ENCODE measurements at regions of chr2 and their contacts with region 1.

Region 1: GRCh38 chr2:9142551-9143263 is 63.9 kb upstream of the ASAP2 start:
- DNase-seq: peak; percentile 73 to 97 (median 88)

Region 2: DNA sequence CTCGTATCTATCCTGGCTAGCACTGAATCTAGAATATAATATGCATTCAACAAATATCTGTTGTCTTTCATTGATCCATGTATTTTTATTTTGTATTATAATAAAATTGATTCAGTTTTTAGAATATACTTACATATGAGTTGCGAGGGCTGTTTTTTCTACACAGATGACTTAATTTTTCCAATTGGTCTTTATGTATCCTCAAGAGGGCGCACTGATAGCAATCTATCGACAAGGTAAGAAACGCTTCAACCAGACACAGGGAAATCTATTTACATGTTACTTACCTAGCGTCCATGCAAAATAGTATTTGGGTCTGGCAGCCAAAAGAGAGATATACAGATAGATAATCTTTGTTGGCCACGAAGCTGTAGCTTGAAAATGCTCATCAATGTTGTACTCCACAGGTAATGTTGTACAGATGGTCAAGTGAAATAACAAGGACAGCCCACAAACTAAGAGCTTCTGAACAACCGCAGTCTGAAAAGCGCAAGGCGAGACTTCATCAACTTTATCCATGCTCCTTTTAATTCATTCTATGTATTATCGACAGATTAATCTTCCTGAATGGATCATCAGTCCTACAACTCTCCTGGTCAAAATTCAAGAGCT is 269.8 kb before region 1 on chr2:
- intact Hi-C with region 1: loop called (anchors 1 kb)
- DNase-seq: no peak

Region 3: DNA sequence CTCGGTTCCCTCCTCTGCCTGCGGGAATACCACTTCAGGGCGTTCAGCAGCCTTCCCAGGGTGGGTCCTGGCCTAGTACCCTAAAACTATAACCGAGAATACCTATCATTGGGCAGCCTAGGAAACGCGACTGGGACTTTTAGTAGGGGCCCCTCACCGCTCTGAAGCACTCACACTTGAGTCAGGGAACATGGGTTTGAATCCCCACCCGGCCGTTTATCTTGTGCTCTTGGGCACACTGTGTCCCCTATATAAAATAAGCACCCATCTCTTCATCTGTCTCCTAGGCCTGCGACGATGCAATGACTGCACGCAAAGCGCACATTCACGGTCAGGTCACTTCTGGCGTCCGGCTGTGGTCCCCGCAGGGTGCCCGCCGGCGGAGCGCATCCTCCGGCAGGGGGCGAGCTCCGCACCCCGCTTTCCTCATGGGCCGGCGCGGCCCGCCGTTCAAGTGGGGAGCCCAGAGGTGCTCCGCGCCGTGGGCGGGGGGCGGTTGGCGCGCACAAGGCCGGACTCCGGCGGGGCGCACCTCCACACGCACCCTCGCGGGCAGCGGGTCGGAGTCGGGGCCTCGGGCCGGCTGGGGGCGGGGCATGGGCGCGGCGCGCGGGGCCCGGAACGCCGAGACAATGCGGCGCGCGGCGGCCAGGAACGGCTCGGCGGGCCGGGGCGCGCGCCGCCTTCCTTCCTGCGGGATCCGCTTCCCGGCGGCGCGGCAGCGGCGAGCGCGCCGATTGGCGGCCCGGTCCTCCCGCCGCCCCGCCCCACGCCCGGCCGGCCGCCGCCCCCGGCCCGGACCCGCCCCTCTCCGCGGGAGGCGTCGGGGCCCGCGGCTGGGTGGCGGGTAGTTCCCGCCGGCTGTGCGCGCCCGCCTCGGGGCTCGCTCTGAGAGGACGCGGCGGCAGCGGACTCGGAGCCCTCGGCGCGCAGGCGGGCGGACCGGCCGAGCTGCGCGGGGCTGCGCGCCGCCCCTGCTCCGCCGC is 63.5 kb after region 1 on chr2 and contains the start of gene ASAP2:
- intact Hi-C with region 1: loop called (anchors 10 kb)
- DNase-seq: peak; percentile 38 to 96 (median 66)

Region 4: GRCh38 chr2:9370746-9371145 is 228.0 kb after region 1 on chr2:
- intact Hi-C with region 1: loop called (anchors 2 kb)
- DNase-seq: no peak

Region 5: DNA sequence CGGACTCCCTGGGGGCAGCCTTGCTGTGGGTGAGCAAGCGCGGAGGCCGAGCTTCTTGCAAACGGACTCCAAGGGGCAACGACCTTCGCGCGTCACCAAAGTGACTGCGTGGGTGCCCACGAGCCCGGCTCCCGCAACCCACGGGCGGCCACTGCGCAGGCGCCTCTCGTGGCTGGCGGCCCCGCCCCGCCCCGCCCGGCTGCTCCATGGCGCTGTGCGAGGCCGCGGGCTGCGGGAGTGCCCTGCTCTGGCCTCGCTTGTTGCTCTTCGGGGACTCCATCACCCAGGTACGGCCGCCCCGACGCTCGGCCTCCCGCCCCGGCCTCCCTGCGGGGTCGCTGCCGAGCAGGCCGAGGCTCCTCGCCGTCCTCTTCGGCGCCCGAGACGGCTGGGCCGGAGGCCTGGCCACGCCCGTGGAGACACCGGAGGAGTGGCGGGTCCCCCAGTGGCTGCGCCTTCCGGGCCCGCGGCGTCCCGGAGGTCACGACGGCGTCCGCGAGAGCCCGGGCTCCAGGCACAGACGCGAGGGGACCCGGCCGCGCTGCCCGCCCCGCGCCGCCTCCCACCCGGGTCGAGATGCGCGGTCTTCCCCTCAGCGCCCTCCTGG is 331.8 kb after region 1 on chr2 and contains the start of gene IAH1:
- intact Hi-C with region 1: loop called (anchors 10 kb)
- DNase-seq: peak; percentile 53 to 96 (median 72)